ENCODE measurements at regions of chr7 and their contacts with region 1.

Region 1: DNA sequence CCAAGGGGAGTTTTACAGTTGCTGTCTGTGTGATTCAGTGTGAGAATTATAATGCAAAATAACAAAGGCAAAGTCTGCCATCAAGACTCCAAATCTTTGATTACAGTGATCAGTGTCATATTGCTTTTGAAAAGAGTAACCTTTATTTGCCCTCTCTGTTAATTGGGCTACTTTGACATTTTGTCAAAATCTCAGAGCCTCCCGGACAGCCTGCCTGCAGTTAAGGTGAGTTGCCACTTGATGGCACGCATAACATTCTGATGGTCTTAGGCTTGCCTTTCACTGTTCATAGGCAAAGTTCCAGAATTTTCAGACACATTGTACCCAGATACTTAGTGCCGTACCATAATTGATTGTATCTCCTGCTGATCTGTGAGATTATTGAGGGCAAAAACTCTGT is 253.5 kb downstream of the ABCA13 start:
- DNase-seq: peak; percentile 40
- H3K4me3 Mint-ChIP-seq: no peak overlapping the region
- H3K27ac Mint-ChIP-seq: no peak overlapping the region
- H3K4me1 Mint-ChIP-seq: peaks cover 21% of the 10 kb centered on the region
- H3K27me3 Mint-ChIP-seq: no peaks in the 10 kb centered on the region
- CTCF ChIP-seq: peak; percentile 63

Region 2: DNA sequence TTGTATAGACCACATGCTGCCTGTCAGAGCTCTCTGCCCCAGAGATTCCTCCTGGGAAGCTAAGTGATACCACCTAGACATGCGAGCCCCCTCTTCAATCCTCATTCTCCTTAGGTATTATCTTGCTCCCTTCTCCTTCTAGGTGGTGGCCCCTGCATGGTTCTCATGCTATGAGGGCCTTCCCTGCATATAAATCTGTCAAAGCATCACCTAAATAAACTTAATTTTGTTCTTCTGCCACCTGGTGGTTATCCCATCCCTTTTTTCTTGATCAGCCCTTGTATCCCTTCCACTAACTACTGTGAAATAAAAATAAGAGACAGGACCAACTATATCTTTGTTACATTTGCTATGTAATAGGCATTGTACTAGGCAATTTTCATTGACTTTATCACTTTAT is 741.7 kb after region 1 on chr7:
- CTCF ChIA-PET with region 1: no interaction called
- intact Hi-C with region 1: loop called (anchors 2 kb)
- DNase-seq: no peak
- H3K4me3 Mint-ChIP-seq: no peak overlapping the region
- H3K27ac Mint-ChIP-seq: no peak overlapping the region
- H3K4me1 Mint-ChIP-seq: no peaks in the 10 kb centered on the region
- H3K27me3 Mint-ChIP-seq: no peaks in the 10 kb centered on the region
- CTCF ChIP-seq: peak; percentile 10

Region 3: GRCh38 chr7:49852619-49853462 is 1428.1 kb after region 1 on chr7:
- CTCF ChIA-PET with region 1: no interaction called
- intact Hi-C with region 1: loop called (anchors 10 kb)
- DNase-seq: peak; percentile 68
- H3K4me3 Mint-ChIP-seq: no peak overlapping the region
- H3K27ac Mint-ChIP-seq: no peak overlapping the region
- H3K4me1 Mint-ChIP-seq: peaks cover 19% of the 10 kb centered on the region
- H3K27me3 Mint-ChIP-seq: no peaks in the 10 kb centered on the region
- CTCF ChIP-seq: peak; percentile 88